ENCODE measurements at regions of chr13 and their contacts with region 1.

Region 1: GRCh38 chr13:49976314-49977258 is 20.3 kb upstream of the TRIM13 start:
- DNase-seq: peak; percentile 54 to 77 (median 66)
- ATAC-seq: peak; percentile 94
- H3K4me3 ChIP-seq: no peak overlapping the region
- H3K4me3 Mint-ChIP-seq: no peak overlapping the region
- H3K27ac ChIP-seq: no peak overlapping the region
- H3K27ac Mint-ChIP-seq: peak overlapping the region in 1 of 9 donors; percentile 38
- H3K4me1 ChIP-seq: no peaks in the 10 kb centered on the region
- H3K4me1 Mint-ChIP-seq: peaks cover 0 to 10% (median 0%) of the 10 kb centered on the region in 7 donors
- H3K27me3 ChIP-seq: no peaks in the 10 kb centered on the region
- H3K27me3 Mint-ChIP-seq: no peaks in the 10 kb centered on the region

Region 2: DNA sequence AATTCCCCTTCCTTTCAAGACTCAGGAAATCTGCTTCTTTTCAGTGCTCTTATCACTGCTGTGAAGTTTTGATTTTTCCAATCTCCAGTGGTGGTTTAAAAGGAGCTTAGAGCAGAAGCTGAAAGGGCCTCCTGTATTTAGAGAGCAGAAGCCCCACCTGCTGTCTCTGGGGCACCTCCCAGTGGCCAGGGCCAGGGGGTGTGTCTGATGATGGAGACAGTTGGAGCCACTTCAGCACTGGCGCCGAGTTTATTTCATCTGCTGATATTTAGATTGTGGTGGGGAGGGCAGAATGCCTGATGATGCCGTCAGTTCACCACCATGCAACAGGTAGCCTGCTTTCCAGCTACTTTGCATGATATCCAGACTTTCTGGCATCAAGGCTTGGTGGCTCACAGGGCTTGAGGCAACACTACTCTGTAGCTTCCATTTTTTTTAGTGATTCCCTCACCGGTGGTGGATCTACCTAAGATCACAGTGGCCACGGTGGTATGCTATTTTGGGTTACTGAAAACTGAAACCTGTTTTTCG is 410.5 kb after region 1 on chr13:
- CTCF ChIA-PET with region 1: interaction called, 3 read pairs
- POLR2A ChIA-PET with region 1: no interaction called
- intact Hi-C with region 1: loop called in 1 of 2 experiments (anchors 1 kb)
- DNase-seq: peak in 2 of 9 donors; percentile 16 to 24
- ATAC-seq: peak; percentile 47
- H3K4me3 ChIP-seq: no peak overlapping the region
- H3K4me3 Mint-ChIP-seq: no peak overlapping the region
- H3K27ac ChIP-seq: no peak overlapping the region
- H3K27ac Mint-ChIP-seq: no peak overlapping the region
- H3K4me1 ChIP-seq: peaks cover 0 to 6% of the 10 kb centered on the region in 2 donors
- H3K4me1 Mint-ChIP-seq: peaks cover 0 to 5% (median 0%) of the 10 kb centered on the region in 7 donors
- H3K27me3 ChIP-seq: no peaks in the 10 kb centered on the region
- H3K27me3 Mint-ChIP-seq: peaks cover 0 to 39% (median 0%) of the 10 kb centered on the region in 5 donors

Region 3: DNA sequence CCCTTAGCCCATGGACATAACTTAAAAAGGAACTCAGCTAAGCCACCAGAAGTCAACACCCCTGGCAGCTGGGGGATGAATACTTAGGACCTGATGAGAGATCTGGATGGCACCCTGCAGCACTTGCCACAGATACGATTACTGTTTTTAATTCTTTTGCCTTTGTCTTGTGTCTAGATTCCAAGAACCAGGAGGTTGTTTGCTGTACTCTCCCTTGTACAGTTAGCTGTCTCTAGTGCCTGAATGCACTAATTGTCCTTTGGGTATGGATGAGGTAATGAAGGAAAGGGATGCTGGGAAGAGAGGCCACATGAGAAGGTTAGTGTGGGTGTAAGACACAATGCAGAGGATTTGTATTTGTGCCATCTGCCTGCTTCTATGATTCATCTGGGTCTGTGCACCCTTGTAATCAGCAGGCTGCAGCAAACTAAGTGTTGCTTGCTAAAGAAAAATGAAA is 424.5 kb after region 1 on chr13:
- CTCF ChIA-PET with region 1: no interaction called
- POLR2A ChIA-PET with region 1: no interaction called
- intact Hi-C with region 1: no loop called
- DNase-seq: no peak
- ATAC-seq: no peak
- H3K4me3 ChIP-seq: no peak overlapping the region
- H3K4me3 Mint-ChIP-seq: no peak overlapping the region
- H3K27ac ChIP-seq: no peak overlapping the region
- H3K27ac Mint-ChIP-seq: no peak overlapping the region
- H3K4me1 ChIP-seq: no peaks in the 10 kb centered on the region
- H3K4me1 Mint-ChIP-seq: peaks cover 0 to 2% (median 0%) of the 10 kb centered on the region in 7 donors
- H3K27me3 ChIP-seq: no peaks in the 10 kb centered on the region
- H3K27me3 Mint-ChIP-seq: peaks cover 0 to 10% (median 0%) of the 10 kb centered on the region in 5 donors

Region 4: DNA sequence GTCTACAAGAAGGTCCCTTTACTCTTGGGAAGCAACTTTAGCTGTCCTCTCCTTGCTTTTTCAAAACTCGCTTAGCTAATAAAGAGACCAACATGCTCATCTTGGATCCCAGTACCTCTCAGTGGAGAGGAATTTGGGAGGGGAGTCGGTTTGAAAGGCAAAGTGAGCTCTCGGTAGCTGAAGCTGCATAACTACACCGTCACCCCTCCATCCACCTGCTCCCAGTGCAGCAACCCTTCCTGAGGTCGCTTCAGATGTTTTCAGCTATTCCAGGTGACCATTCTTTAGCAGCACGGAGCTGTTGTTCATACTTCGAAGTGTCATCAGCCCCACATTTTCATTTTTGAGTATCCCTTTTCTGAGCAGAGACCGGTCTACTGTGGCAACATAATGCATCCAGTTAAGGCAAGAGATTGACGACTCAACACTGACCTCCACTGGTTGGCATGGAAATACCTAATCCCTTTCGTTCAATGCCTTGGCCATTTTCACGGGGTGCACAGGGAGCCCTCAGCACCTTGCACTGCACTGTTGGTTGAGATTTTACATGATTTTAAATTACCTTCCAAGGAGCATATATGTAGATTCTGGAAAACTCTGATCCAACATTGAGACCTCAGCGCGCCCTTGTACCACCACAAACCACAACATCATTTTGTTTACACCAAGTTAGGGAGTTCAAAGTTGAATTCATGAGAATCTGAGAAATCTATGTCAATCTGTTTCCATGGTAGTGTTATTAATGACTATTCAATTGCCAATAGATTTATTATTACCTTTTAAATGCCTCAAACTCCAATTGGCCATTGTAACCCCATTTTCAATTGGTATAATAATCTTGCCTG is 824.7 kb after region 1 on chr13:
- CTCF ChIA-PET with region 1: interaction called, 19 read pairs
- POLR2A ChIA-PET with region 1: interaction called, 4 read pairs
- intact Hi-C with region 1: loop called (anchors 1 kb)
- DNase-seq: peak; percentile 13 to 71 (median 56)
- ATAC-seq: peak; percentile 96
- H3K4me3 ChIP-seq: no peak overlapping the region
- H3K4me3 Mint-ChIP-seq: peak overlapping the region in 1 of 10 donors; percentile 39
- H3K27ac ChIP-seq: no peak overlapping the region
- H3K27ac Mint-ChIP-seq: peak overlapping the region in 1 of 9 donors; percentile 20
- H3K4me1 ChIP-seq: peaks cover 0 to 3% of the 10 kb centered on the region in 2 donors
- H3K4me1 Mint-ChIP-seq: peaks cover 0 to 26% (median 6%) of the 10 kb centered on the region in 7 donors
- H3K27me3 ChIP-seq: no peaks in the 10 kb centered on the region
- H3K27me3 Mint-ChIP-seq: peaks cover 0 to 8% (median 0%) of the 10 kb centered on the region in 5 donors

Region 5: DNA sequence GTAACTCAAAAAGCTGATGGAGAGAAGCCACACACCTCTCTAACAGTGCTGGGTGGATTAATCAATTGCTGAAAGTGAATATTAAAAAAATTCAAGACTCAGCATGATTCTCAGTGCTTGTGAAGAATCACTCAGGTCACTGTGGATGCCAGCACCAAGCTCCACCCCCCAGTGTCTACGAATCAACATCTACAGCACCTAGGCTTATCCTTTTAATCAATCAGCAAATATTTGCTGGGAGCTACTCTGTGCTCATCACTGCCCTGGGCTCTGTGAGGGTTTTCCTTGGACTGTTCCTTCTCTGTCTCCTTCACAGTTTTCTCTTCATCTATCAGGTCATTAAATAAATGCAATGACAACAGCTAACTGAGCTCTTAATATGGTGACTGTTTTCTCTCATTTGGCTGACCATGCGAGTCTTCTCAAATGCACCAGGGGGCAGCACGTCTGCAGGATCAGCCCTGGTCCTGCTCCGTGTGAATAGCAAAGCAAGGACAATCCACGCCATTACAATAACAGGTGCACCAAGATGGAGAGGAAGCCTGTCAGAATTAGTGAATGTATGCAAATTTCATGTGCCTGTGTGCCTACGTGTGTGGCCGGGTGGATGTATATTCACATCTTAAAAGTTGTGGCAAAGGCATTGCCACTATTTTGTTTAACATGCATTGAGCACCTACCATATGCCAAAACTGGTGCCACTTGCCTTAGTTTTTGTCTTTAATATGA is 1149.1 kb after region 1 on chr13:
- CTCF ChIA-PET with region 1: no interaction called
- POLR2A ChIA-PET with region 1: no interaction called
- intact Hi-C with region 1: loop called in 1 of 2 experiments (anchors 2 kb)
- DNase-seq: peak in 6 of 9 donors; percentile 11 to 41 (median 26)
- ATAC-seq: peak; percentile 80
- H3K4me3 ChIP-seq: no peak overlapping the region
- H3K4me3 Mint-ChIP-seq: no peak overlapping the region
- H3K27ac ChIP-seq: no peak overlapping the region
- H3K27ac Mint-ChIP-seq: no peak overlapping the region
- H3K4me1 ChIP-seq: no peaks in the 10 kb centered on the region
- H3K4me1 Mint-ChIP-seq: peaks cover 0 to 13% (median 0%) of the 10 kb centered on the region in 7 donors
- H3K27me3 ChIP-seq: no peaks in the 10 kb centered on the region
- H3K27me3 Mint-ChIP-seq: peaks cover 0 to 21% (median 13%) of the 10 kb centered on the region in 5 donors